Common myeloid progenitor, CD34-positive (primary cell): ENCODE measurements at regions of chr16 and their contacts with region 1.

Region 1: GRCh38 chr16:85114909-85115567 is 2.8 kb upstream of the CIBAR2 start:
- DNase-seq: peak; percentile 66 to 73 (median 72)
- H3K4me3 ChIP-seq: peak overlapping the region in 5 of 7 experiments; percentile 19 to 58 (median 35)
- H3K27ac ChIP-seq: peak overlapping the region in 1 of 2 experiments; percentile 34
- H3K4me1 ChIP-seq: peaks cover 0 to 4% (median 2%) of the 10 kb centered on the region in 4 experiments
- H3K27me3 ChIP-seq: no peaks in the 10 kb centered on the region

Region 2: DNA sequence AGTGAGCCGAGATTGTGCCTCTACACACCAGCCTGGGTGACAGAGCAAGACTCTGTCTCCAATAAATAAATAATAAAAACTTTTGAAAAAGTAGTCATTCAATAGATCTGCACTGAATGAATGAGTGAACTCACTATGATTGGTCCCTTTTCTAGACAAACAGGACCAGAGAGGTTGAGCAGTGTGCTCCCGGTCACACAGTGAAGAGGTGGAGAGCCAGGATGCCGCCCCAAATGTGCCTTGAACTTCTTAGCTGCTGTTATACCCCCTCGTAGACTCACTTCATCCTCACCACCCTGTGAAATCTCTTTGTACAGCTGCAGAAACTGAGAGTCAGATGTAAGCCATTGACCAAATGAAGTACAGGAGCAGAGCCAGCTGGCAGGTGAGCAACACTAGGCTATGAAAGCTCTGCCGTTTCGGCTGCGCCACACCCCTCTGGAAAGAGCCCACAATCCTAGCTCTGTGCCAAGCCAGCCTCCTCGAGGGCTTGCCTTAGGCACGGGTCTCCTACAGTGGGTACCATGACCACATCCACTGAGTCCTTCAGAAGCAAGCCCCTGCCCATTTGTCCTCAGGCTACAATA is 95.3 kb before region 1 on chr16:
- CTCF ChIA-PET with region 1: no interaction called
- POLR2A ChIA-PET with region 1: no interaction called
- DNase-seq: no peak
- H3K4me3 ChIP-seq: no peak overlapping the region
- H3K27ac ChIP-seq: no peak overlapping the region
- H3K4me1 ChIP-seq: peaks cover 6 to 36% (median 24%) of the 10 kb centered on the region in 4 experiments
- H3K27me3 ChIP-seq: no peaks in the 10 kb centered on the region

Region 3: GRCh38 chr16:85104821-85105391 is 10.1 kb before region 1 on chr16:
- CTCF ChIA-PET with region 1: interaction called, 21 read pairs
- POLR2A ChIA-PET with region 1: no interaction called
- DNase-seq: peak; percentile 25 to 82 (median 69)
- H3K4me3 ChIP-seq: peak overlapping the region in 2 of 7 experiments; percentile 14 to 19
- H3K27ac ChIP-seq: no peak overlapping the region
- H3K4me1 ChIP-seq: peaks cover 2 to 28% (median 18%) of the 10 kb centered on the region in 4 experiments
- H3K27me3 ChIP-seq: no peaks in the 10 kb centered on the region

Region 4: DNA sequence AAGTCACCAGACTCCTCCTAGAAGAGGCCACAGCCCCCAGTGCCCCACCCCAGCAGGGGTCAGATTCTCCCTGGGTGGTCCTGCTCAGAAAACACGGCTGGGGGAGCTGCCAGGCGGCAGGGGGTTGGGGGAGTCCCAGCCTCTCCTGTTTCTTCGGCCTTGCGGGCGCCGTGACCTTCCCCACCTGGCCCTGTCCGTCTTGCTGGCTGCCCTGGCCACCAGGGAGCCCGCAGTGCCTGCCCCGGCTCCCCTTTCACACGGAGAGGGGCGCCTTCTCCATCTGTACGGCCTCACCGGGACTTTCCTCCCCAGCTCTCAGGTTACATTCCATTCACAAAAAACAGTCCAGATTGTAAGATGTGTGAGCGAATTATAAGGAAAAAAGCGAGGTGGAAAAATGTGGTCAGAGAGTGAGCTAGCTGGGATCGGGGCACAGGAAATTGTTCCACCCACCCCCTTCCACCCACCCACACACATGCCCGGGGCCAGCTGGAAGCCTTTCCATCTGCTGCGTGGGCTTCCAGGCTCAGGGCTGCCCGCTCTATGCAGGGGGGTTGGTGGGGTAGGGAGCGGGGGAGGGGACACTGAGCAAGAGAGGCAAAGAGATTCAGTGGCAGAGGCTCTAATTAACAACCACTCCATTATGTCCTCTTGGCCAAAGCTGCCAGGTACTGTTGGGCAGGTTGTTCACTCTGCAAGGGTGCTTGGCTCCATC is 11.8 kb after region 1 on chr16:
- CTCF ChIA-PET with region 1: interaction called, 14 read pairs
- POLR2A ChIA-PET with region 1: no interaction called
- DNase-seq: peak in 2 of 3 donors; percentile 18 to 26
- H3K4me3 ChIP-seq: no peak overlapping the region
- H3K27ac ChIP-seq: no peak overlapping the region
- H3K4me1 ChIP-seq: peaks cover 0 to 7% (median 6%) of the 10 kb centered on the region in 4 experiments
- H3K27me3 ChIP-seq: peaks cover 0 to 3% (median 0%) of the 10 kb centered on the region in 5 experiments